ENCODE measurements at regions of chr4 and their contacts with region 1.

Region 1: GRCh38 chr4:2634014-2634413 is 97.6 kb downstream of the FAM193A start:
- DNase-seq: no peak
- ATAC-seq: peak; percentile 43

Region 2: GRCh38 chr4:2608291-2608690 is 25.7 kb before region 1 on chr4:
- intact Hi-C with region 1: no loop called
- DNase-seq: no peak
- ATAC-seq: peak; percentile 56

Region 3: DNA sequence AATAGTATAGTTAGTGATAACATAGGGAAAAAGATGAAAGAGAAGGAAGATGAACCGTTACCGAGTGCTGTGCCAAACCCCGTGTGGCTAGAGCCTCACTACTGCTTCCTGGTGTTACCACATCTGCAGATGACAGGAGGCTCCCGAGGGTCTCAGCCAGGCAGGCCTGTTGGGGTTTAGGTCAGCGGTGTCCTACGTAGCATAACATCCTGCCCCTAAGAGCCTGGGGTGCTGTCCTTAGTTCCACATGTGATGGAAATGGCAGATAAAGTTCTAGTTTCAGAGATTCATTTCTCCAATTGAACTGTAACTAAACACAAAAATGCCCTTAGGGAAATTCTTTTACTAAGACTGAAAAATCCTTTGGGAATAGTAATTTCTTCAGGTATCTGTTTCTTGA is 18.8 kb after region 1 on chr4:
- intact Hi-C with region 1: loop called (anchors 2 kb)
- DNase-seq: no peak
- ATAC-seq: no peak